PC-9 (cell line): ENCODE measurements at regions of chr9 and their contacts with region 1.

Region 1: DNA sequence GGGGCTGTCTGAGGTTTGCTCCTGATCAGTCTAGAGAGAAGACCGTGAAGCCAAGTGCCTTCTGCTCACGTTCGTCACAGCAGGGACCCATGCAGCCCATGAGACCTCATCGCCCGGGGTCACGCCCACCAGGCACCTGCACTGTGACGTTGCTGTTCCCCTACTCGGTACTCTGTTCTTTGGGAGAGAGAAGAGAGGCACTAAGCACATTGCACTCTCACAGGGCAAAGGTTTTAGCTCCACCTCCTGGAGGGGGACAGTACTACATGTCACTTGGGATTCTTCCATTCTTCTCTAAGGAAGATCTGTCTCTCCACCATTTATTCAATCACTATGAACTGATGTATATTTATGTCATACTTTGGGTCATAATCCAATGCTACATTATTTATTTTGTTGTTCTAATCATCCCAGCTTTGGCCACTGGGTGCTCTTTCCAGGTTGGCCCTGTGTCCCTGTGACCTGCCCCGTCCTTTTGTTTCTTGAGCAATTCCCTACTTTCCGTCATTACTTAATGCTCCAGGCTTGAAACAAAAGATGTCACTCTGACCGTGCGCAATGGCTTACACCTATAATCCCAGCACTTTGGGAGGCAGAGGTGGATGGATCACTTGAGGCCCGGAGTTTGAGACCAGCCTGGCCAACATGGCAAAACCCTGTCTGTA is 31.4 kb upstream of the BRD3 start:
- DNase-seq: peak; percentile 61 to 66
- H3K4me3 ChIP-seq: no peak overlapping the region
- H3K27ac ChIP-seq: no peak overlapping the region
- H3K4me1 ChIP-seq: no peaks in the 10 kb centered on the region
- H3K27me3 ChIP-seq: peaks cover 79% of the 10 kb centered on the region
- CTCF ChIP-seq: peak; percentile 91

Region 2: DNA sequence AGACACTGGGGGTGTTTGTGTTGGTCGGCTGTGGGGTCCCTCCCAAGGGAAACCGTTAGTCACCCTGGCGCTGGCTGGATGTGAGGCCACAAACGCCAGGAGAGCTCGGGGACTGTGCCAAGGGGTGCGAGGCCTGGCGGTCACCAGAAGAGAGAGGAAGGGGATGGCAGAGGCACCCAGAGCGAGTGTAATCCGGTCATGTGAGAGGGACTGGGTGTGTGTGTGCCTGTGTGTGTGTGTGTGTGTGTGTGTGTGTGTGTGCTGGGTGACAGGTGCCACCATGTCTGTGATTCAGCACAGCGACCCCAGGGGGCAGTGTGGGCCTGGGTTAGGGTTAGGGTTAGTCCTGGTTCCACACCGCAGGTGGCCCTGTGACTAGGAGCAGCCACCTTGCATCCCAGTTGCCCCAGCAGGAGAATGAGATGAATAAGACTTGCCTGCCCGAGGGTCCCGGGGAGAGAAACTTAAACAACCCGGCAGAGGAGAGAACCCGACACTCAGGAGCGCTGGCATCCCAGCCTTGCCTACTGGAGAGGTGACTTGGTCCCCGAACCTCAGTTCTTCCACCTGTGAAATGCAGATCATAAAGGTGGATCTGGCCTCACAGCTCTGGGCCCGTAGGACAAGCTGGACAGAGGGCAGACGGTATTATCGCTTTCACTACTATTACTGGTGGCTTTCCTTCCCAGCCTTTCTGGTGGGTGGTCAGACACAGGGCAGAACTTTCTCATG is 566.2 kb before region 1 on chr9:
- CTCF ChIA-PET with region 1: no interaction called
- POLR2A ChIA-PET with region 1: no interaction called
- intact Hi-C with region 1: loop called (anchors 5 kb)
- DNase-seq: peak in 1 of 2 experiments; percentile 78
- H3K4me3 ChIP-seq: no peak overlapping the region
- H3K27ac ChIP-seq: no peak overlapping the region
- H3K4me1 ChIP-seq: no peaks in the 10 kb centered on the region
- H3K27me3 ChIP-seq: peaks cover 98% of the 10 kb centered on the region
- CTCF ChIP-seq: peak; percentile 68

Region 3: DNA sequence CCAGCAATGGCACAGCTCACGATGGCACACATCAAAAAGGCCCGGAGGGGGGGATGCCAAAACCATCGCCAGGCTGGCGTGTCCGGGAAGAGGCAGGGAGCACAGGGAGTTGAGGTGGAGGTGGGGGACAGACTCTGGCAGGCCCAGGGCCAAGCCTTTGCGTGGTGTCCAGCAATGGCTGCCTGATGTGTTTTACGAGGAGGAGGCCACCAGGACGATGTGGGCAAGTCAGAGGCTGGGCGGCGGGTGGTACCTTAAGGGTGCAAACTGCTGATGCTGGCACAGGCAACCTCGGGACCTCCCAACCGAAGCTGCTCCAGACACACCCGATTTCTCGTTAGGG is 111.8 kb before region 1 on chr9:
- CTCF ChIA-PET with region 1: no interaction called
- POLR2A ChIA-PET with region 1: no interaction called
- intact Hi-C with region 1: no loop called
- DNase-seq: no peak
- H3K4me3 ChIP-seq: no peak overlapping the region
- H3K27ac ChIP-seq: no peak overlapping the region
- H3K4me1 ChIP-seq: peaks cover 11% of the 10 kb centered on the region
- H3K27me3 ChIP-seq: no peaks in the 10 kb centered on the region
- CTCF ChIP-seq: no peak